Activated T-helper 1 cell treated with anti-CD3 and anti-CD28 coated beads, Interleukin-12 subunit alpha, Interleukin-12 subunit beta, Interleukin-2, Interleukin-4 antibody, amounts not matched to agents 30 ng/mL and 10 ng/mL and 1 ng/mL, durations not matched to agents 14 hours and 24 hours and 36 hours (primary cell): ENCODE measurements at regions of chr6 and their contacts with region 1.

Region 1: DNA sequence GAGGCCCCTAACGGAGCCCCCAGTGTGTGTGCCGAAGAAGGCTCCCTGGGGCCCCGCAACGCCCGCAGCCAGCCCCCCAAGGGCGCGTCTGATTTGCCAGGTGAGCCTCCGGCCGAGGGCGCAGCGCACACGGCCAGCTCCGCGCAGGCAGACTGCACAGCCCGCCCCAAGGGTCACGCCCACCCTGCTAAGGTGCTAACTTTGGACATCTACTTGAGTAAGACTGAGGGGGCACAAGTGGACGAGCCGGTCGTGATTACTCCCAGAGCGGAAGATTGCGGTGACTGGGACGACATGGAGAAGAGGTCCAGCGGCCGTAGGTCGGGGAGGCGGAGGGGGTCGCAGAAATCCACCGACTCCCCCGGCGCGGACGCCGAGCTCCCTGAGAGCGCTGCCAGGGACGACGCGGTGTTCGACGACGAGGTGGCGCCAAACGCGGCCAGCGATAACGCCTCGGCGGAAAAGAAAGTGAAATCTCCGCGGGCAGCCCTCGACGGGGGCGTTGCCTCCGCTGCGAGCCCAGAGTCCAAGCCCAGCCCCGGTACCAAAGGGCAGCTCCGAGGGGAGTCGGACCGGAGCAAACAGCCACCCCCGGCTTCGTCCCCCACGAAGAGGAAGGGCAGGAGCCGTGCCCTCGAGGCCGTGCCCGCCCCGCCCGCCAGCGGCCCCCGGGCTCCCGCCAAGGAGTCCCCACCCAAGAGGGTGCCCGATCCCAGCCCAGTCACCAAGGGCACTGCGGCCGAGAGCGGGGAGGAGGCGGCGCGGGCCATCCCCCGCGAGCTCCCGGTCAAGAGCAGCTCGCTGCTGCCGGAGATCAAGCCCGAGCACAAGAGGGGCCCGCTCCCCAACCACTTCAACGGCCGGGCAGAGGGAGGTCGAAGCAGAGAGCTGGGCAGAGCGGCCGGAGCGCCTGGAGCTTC is 117.0 kb downstream of the RTN4IP1 start:
- DNase-seq: peak; percentile 81
- H3K4me3 Mint-ChIP-seq: peak overlapping the region; percentile 91
- H3K27ac Mint-ChIP-seq: peak overlapping the region; percentile 93
- H3K4me1 Mint-ChIP-seq: peaks cover 58% of the 10 kb centered on the region
- H3K27me3 Mint-ChIP-seq: peaks cover 21% of the 10 kb centered on the region

Region 2: DNA sequence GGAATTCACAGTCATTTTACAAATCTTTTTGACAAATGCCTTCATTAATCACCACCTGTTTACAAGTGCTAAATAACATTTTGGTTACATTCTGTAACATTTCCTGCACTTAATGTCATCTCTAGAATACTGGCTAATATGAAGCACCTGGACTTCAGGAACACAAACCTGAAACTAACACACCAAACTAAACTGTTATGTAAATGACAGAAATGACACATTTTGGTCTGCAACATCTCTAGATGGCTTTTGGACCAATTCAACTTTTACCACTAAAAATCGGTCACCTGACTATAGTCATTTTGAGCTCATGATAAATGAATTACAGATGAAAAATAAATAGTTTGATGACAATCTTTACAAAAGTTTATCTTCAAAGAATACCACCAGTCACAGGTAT is 267.4 kb before region 1 on chr6:
- intact Hi-C with region 1: no loop called
- DNase-seq: no peak
- H3K4me3 Mint-ChIP-seq: no peak overlapping the region
- H3K27ac Mint-ChIP-seq: no peak overlapping the region
- H3K4me1 Mint-ChIP-seq: peaks cover 16% of the 10 kb centered on the region
- H3K27me3 Mint-ChIP-seq: no peaks in the 10 kb centered on the region

Region 3: DNA sequence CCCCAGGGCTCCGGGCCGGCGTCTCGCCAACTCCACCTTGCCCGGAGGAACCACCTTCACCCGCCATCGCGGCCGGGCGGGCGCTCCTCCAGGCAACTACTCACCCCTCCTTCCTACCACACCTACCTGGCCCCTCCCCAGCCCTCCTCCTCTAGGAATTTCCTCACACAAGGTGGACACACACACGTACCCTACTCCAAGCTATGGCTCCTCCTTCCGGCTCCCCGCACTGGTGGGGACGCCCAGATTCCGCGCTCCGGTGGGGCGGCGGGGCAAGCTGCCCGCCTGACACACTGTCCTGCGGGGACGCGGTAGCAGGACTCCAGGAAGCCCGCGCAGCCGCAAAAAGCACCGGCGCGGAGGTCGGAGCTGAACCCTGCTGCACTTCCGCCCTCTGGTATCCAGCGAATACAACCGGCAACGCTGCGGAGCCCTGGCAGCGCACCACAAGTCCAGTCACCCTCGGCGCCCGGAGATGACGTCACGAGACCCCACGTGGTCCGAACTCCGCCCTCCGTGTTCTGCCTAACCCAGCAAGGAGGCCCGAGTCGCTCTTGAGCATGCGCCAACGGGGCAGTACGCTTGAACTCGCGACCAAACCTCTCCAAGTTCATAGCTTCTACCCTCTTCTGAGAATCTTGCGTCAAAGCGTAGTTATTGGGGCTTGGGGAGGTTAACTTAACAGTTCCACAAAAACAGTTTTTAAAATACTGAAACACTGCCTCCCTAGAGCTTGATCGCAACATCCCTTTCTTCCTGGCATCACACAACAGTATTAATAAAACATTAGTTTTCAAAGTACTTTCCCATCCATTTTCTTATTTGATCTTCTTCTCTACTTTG is 186.8 kb before region 1 on chr6 and contains the start of gene ATG5:
- intact Hi-C with region 1: loop called (anchors 2 kb)
- DNase-seq: peak; percentile 100
- H3K4me3 Mint-ChIP-seq: peak within 1 kb of the TSS; percentile 100
- H3K27ac Mint-ChIP-seq: peak within 1 kb of the TSS; percentile 98
- H3K4me1 Mint-ChIP-seq: peaks cover 35% of the 10 kb centered on the region
- H3K27me3 Mint-ChIP-seq: peaks cover 22% of the 10 kb centered on the region
- total RNA-seq, gene ATG5: 36.0 and 36.7 TPM in 2 replicates

Region 4: DNA sequence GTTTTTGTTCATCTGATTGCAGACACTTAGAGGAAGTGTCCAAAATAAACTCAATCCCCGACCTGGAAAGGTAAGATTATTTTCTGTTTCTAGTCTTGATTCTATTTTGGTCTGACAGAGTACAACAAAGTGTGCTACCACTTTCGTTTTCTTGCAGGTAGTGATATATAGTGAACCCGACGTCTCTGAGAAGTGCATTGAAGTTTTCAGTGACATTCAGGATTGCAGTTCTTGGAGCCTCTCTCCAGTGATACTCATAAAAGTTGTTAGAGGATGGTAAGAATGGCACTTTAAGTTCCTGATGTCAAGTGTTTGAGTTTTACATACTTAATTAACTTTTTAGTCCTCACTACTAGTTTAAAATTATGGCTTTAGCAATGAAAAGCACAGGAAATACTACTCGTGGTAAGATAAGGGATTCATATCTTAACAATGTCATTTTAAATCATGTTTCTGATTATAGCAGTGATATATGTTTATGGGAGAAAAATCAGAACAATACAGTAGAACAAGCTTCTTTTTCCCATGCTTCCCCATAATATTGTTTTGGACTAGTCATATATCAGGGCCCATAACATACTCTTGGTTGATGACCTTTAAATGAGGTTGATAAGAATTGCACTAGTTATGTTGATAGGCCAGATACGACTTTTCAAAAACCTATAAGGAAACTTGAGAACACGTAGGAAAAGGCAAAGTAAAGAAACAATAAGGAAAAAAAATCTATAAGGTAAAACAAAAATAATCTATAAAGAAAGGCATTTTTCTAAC is 13.0 kb after region 1 on chr6:
- intact Hi-C with region 1: loop called (anchors 1 kb)
- DNase-seq: no peak
- H3K4me3 Mint-ChIP-seq: peak overlapping the region; percentile 82
- H3K27ac Mint-ChIP-seq: peak overlapping the region; percentile 82
- H3K4me1 Mint-ChIP-seq: peaks cover 71% of the 10 kb centered on the region
- H3K27me3 Mint-ChIP-seq: no peaks in the 10 kb centered on the region

Region 5: GRCh38 chr6:106534564-106534982 is 22.3 kb after region 1 on chr6:
- intact Hi-C with region 1: loop called (anchors 1 kb)
- DNase-seq: no peak
- H3K4me3 Mint-ChIP-seq: peak overlapping the region; percentile 10
- H3K27ac Mint-ChIP-seq: peak overlapping the region; percentile 74
- H3K4me1 Mint-ChIP-seq: peaks cover 66% of the 10 kb centered on the region
- H3K27me3 Mint-ChIP-seq: no peaks in the 10 kb centered on the region

Region 6: DNA sequence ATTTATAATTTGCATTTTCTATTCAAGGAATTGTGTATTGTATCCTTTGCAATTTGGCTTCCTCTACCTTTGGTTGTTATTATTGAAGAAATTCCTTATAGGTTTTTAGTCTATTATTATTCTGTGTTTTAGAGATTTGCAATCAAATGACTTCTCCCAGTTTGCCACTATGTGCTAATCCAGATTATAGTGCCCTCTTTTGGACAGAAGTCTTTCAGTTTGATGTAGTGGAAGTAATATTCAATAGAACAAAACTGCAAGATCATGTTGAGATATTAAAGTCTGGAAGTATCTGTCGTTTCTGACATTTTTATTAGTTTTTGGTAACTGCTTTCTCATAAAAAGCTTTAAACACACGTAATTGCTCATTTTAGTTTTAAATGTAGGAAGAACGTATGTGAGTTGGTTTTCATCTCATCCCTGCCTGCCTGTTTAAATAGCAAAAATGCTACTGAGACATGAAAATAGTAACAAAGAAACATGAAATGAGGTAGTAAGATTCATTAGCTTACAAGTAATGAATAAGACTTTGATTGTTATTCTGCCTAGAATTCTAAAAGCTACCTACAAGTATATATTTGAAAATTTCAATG is 44.2 kb after region 1 on chr6:
- intact Hi-C with region 1: loop called (anchors 1 kb)
- DNase-seq: no peak
- H3K4me3 Mint-ChIP-seq: no peak overlapping the region
- H3K27ac Mint-ChIP-seq: no peak overlapping the region
- H3K4me1 Mint-ChIP-seq: peaks cover 23% of the 10 kb centered on the region
- H3K27me3 Mint-ChIP-seq: no peaks in the 10 kb centered on the region

Region 7: GRCh38 chr6:107026965-107027364 is 514.7 kb after region 1 on chr6:
- intact Hi-C with region 1: loop called (anchors 5 kb)
- DNase-seq: no peak
- H3K4me3 Mint-ChIP-seq: peak overlapping the region; percentile 56
- H3K27ac Mint-ChIP-seq: peak overlapping the region; percentile 37
- H3K4me1 Mint-ChIP-seq: peaks cover 9% of the 10 kb centered on the region
- H3K27me3 Mint-ChIP-seq: no peaks in the 10 kb centered on the region